Activated naive CD8-positive, alpha-beta T cell treated with anti-CD3 and anti-CD28 coated beads, Interleukin-2, amount 10 ng/mL, durations not matched to agents 7 days and 5 days (primary cell): ENCODE measurements at regions of chr11 and their contacts with region 1.

Region 1: DNA sequence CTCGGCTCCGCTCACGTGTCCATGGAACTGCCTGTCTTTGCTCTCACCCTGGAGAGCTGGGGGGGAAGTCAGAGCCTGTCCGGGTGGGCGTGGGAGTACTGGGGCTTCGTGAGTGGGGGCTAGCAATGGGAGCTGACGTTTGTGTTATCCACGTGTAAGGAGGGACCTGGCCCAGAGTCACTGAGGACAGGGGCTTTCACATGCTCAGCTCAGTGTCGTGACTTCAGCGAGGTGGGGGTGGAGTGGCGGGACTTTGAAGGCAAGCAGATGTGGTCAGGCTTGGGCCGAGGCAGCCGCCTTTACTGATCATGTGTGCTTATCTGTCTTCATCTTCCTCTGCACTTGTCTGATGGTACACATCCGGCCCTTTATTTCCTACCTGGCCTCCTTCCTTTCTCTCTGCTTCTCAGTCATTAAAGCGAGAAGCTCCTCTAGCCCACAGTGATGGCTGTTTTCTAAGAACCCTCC is 113.1 kb upstream of the NNMT start:
- DNase-seq: peak; percentile 79
- ATAC-seq: peak; percentile 93
- H3K4me3 Mint-ChIP-seq: peak overlapping the region; percentile 68
- H3K27ac Mint-ChIP-seq: peak overlapping the region; percentile 97
- H3K4me1 Mint-ChIP-seq: peaks cover 91% of the 10 kb centered on the region
- H3K27me3 Mint-ChIP-seq: no peaks in the 10 kb centered on the region

Region 2: DNA sequence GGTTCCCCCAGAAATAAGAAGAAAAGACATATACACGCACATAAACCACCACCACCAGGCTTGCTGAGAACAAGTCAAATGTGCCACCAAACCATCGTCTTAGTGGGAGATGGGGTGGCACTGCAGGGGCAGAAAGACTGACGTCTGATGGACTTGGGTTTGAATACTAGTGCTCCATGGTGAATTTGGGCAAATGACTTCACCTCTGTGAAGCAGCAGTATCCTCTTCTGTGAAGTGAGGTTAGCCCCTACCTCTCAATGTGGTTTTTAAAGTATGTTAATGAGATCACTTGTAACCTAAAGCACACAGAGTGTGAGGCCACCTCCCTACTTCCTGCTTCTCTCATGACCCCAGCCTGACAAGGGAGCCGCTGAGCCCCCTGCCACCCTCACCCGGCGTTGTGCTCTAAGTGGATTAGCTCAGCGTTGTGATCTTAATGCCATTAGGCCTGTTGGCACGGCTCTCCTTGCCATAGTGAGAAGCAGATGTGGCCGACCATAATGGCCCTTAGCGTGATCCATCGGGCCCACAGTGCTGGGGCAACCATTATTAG is 109.2 kb before region 1 on chr11:
- POLR2A ChIA-PET with region 1: interaction called, 12 read pairs
- DNase-seq: peak; percentile 59
- ATAC-seq: peak; percentile 81
- H3K4me3 Mint-ChIP-seq: peak overlapping the region; percentile 56
- H3K27ac Mint-ChIP-seq: peak overlapping the region; percentile 91
- H3K4me1 Mint-ChIP-seq: peaks cover 61% of the 10 kb centered on the region
- H3K27me3 Mint-ChIP-seq: peaks cover 3% of the 10 kb centered on the region

Region 3: DNA sequence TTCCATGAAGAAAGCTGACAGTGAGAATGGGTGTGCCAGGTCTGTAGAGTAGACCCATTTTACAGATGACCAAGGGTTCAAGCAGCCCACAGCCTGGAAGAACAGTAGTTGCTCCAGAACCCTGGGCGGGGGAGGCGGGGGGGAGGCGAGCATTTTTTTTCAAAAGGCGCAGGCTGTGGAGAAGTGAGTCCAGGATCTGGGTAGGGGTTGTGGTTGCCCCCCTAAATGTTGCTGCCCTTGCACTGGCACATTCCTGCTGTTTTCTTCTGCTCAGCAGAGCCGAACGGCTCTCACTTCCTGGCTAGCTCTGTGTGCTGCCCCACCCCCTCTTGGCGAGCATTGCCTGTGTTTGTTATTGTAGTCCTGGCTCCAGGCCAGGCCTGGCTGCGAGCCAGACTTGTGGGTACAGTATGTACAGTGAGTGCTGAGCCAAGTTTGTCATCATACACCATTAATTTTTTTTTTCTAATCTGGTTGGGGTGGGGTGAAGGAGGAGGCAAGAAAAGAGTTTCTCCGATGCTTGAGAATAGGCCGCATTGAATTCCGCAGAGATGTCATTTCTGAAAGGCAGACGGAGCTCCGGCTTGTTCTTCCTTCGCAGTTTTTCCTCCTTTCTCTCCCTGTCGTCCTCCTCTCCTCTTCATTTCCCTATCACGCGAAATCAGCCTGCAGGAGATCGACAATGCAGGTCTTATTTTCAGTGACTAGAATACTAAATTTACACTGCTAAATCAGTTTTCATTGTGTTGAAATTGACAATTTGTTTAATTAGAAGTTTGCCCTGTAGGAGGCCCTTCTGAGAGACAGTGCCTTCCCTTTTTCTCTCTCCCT is 23.1 kb before region 1 on chr11:
- POLR2A ChIA-PET with region 1: interaction called, 19 read pairs
- DNase-seq: peak; percentile 97
- ATAC-seq: peak; percentile 97
- H3K4me3 Mint-ChIP-seq: peak overlapping the region; percentile 64
- H3K27ac Mint-ChIP-seq: peak overlapping the region; percentile 88
- H3K4me1 Mint-ChIP-seq: peaks cover 46% of the 10 kb centered on the region
- H3K27me3 Mint-ChIP-seq: no peaks in the 10 kb centered on the region

Region 4: GRCh38 chr11:114166897-114167323 is 16.2 kb before region 1 on chr11:
- POLR2A ChIA-PET with region 1: interaction called, 38 read pairs
- DNase-seq: no peak
- ATAC-seq: peak; percentile 41
- H3K4me3 Mint-ChIP-seq: peak overlapping the region; percentile 54
- H3K27ac Mint-ChIP-seq: peak overlapping the region; percentile 79
- H3K4me1 Mint-ChIP-seq: peaks cover 53% of the 10 kb centered on the region
- H3K27me3 Mint-ChIP-seq: no peaks in the 10 kb centered on the region

Region 5: GRCh38 chr11:114208377-114208776 is 25.3 kb after region 1 on chr11:
- POLR2A ChIA-PET with region 1: interaction called, 13 read pairs
- DNase-seq: no peak
- ATAC-seq: peak; percentile 99
- H3K4me3 Mint-ChIP-seq: peak overlapping the region; percentile 25
- H3K27ac Mint-ChIP-seq: peak overlapping the region; percentile 86
- H3K4me1 Mint-ChIP-seq: peaks cover 42% of the 10 kb centered on the region
- H3K27me3 Mint-ChIP-seq: no peaks in the 10 kb centered on the region